ENCODE measurements at regions of chr5 and their contacts with region 1.

Region 1: DNA sequence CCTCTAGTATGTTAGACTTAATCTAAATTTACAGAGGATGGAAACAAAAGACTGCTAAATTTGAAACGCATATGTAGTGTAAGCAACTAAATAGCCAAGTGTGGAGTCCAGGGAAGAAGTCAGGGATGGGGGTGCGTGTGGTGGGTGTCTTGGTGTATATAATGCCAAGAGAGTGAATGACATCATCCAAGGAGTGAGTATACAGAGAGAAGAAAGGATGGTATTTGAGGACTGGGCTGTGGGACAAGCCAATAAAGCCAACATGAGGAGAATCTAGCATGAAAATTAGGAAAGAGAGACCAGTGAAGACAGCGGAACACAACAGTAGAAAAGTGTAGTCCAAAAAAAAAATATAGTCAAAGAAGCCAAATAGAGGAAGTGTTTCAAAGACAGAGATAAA is 44.5 kb downstream of the CEP120 start:
- DNase-seq: no peak
- H3K4me3 ChIP-seq: no peak overlapping the region
- H3K27ac ChIP-seq: no peak overlapping the region
- H3K4me1 ChIP-seq: no peaks in the 10 kb centered on the region
- H3K27me3 ChIP-seq: no peaks in the 10 kb centered on the region
- CTCF ChIP-seq: no peak
- POLR2A ChIP-seq: no peak

Region 2: GRCh38 chr5:123412206-123412605 is 33.5 kb after region 1 on chr5:
- CTCF ChIA-PET with region 1: no interaction called
- POLR2A ChIA-PET with region 1: no interaction called
- dilution Hi-C with region 1: no loop called
- intact Hi-C with region 1: loop called (anchors 2 kb)
- DNase-seq: no peak
- H3K4me3 ChIP-seq: no peak overlapping the region
- H3K27ac ChIP-seq: no peak overlapping the region
- H3K4me1 ChIP-seq: no peaks in the 10 kb centered on the region
- H3K27me3 ChIP-seq: no peaks in the 10 kb centered on the region
- CTCF ChIP-seq: no peak
- POLR2A ChIP-seq: no peak

Measured in endothelial cell of umbilical vein (primary cell).